ENCODE measurements at regions of chr18 and their contacts with region 1.

Region 1: GRCh38 chr18:36284671-36285295 is 12.7 kb upstream of the FHOD3 start:
- DNase-seq: peak; percentile 58
- H3K4me3 Mint-ChIP-seq: no peak overlapping the region
- H3K27ac Mint-ChIP-seq: no peak overlapping the region
- H3K4me1 Mint-ChIP-seq: no peaks in the 10 kb centered on the region
- H3K27me3 Mint-ChIP-seq: peaks cover 33% of the 10 kb centered on the region

Region 2: DNA sequence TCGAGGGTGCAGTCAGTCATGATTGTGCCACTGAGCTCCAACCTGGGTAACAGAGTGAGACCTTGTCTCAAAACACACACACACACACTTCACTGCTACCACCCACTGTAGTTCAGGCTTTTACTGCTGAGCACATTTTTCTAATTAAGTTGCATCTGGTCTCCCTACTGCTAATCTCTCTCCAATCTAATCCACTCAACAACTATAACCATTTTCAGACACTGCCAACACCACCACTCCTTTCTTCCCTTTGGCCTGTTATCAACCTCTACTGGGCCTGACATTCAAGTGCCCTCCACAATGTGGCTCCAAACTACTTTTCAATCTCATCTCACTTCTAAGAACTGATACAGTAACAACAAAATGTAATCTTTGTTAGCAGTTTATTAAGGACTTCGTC is 267.6 kb before region 1 on chr18:
- CTCF ChIA-PET with region 1: interaction called, 38 read pairs
- DNase-seq: no peak
- H3K4me3 Mint-ChIP-seq: no peak overlapping the region
- H3K27ac Mint-ChIP-seq: no peak overlapping the region
- H3K4me1 Mint-ChIP-seq: no peaks in the 10 kb centered on the region
- H3K27me3 Mint-ChIP-seq: no peaks in the 10 kb centered on the region

Region 3: DNA sequence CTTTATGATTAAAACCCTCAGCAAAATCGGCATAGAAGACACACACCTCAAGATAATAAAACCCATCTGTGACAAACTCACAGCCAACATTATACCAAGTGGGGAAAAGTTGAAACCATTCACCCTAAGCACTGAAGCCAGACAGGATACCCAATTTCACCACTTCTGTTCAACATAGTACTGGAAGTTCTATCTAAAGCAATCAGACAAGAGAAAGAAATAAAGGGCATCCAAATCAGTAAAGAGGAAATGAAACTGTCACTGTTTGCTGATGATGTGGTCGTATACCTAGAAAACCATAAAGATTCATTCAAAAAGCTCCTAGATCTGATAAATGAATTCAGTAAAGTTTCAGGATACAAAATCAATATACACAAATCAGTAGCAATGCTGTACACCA is 201.1 kb before region 1 on chr18:
- CTCF ChIA-PET with region 1: no interaction called
- DNase-seq: no peak
- H3K4me3 Mint-ChIP-seq: no peak overlapping the region
- H3K27ac Mint-ChIP-seq: no peak overlapping the region
- H3K4me1 Mint-ChIP-seq: peaks cover 16% of the 10 kb centered on the region
- H3K27me3 Mint-ChIP-seq: peaks cover 14% of the 10 kb centered on the region

Region 4: DNA sequence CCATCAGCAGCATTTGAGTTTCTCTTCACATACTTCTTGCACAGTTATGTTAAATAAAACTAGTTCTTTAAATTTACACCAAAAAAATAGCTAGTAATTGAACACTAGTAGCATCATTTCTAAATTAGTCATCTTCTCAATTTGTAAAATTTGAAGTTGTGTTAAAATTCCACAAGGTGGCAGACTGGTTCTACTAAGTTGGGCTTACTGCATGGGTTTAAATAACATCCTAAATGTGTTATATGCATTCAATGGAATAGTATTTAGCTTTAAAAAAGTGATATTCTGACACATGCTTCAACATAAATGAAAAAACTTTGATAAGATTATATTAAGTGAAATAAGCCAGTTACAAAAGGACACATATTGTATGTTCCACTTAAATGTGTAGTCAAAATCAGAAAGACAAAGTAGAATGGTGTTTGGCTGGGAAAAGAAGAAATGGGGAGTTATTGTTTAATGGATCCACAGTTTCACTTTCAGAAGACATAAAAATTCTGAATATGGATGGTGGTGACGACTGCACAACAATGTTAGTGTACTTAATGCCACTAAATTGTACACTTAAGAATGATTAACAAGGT is 188.8 kb before region 1 on chr18:
- CTCF ChIA-PET with region 1: interaction called, 76 read pairs
- DNase-seq: no peak
- H3K4me3 Mint-ChIP-seq: no peak overlapping the region
- H3K27ac Mint-ChIP-seq: no peak overlapping the region
- H3K4me1 Mint-ChIP-seq: peaks cover 7% of the 10 kb centered on the region
- H3K27me3 Mint-ChIP-seq: peaks cover 4% of the 10 kb centered on the region

Measured in activated naive CD4-positive, alpha-beta T cell treated with anti-CD3 and anti-CD28 coated beads, Interleukin-2, amount 10 ng/mL, durations not matched to agents 7 days and 5 days (primary cell).